ENCODE measurements at regions of chr3 and their contacts with region 1.

Region 1: GRCh38 chr3:149717391-149718056 is 34.8 kb downstream of the COMMD2 start:
- DNase-seq: no peak
- ATAC-seq: no peak
- H3K4me3 Mint-ChIP-seq: peak overlapping the region; percentile 25
- H3K27ac Mint-ChIP-seq: no peak overlapping the region
- H3K4me1 Mint-ChIP-seq: no peaks in the 10 kb centered on the region
- H3K27me3 Mint-ChIP-seq: no peaks in the 10 kb centered on the region
- CTCF ChIP-seq: no peak

Region 2: GRCh38 chr3:148955544-148956346 is 761.8 kb before region 1 on chr3:
- CTCF ChIA-PET with region 1: no interaction called
- POLR2A ChIA-PET with region 1: no interaction called
- intact Hi-C with region 1: loop called (anchors 5 kb)
- DNase-seq: no peak
- ATAC-seq: no peak
- H3K4me3 Mint-ChIP-seq: no peak overlapping the region
- H3K27ac Mint-ChIP-seq: no peak overlapping the region
- H3K4me1 Mint-ChIP-seq: no peaks in the 10 kb centered on the region
- H3K27me3 Mint-ChIP-seq: peaks cover 7% of the 10 kb centered on the region
- CTCF ChIP-seq: no peak

Region 3: GRCh38 chr3:149273096-149273751 is 444.3 kb before region 1 on chr3:
- CTCF ChIA-PET with region 1: no interaction called
- POLR2A ChIA-PET with region 1: no interaction called
- intact Hi-C with region 1: loop called (anchors 5 kb)
- DNase-seq: no peak
- ATAC-seq: peak; percentile 88
- H3K4me3 Mint-ChIP-seq: no peak overlapping the region
- H3K27ac Mint-ChIP-seq: no peak overlapping the region
- H3K4me1 Mint-ChIP-seq: peaks cover 19% of the 10 kb centered on the region
- H3K27me3 Mint-ChIP-seq: no peaks in the 10 kb centered on the region
- CTCF ChIP-seq: peak; percentile 92

Region 4: GRCh38 chr3:149494022-149494758 is 223.3 kb before region 1 on chr3:
- CTCF ChIA-PET with region 1: no interaction called
- POLR2A ChIA-PET with region 1: no interaction called
- intact Hi-C with region 1: loop called (anchors 1 kb)
- DNase-seq: no peak
- ATAC-seq: no peak
- H3K4me3 Mint-ChIP-seq: no peak overlapping the region
- H3K27ac Mint-ChIP-seq: no peak overlapping the region
- H3K4me1 Mint-ChIP-seq: no peaks in the 10 kb centered on the region
- H3K27me3 Mint-ChIP-seq: peaks cover 15% of the 10 kb centered on the region
- CTCF ChIP-seq: no peak

Region 5: DNA sequence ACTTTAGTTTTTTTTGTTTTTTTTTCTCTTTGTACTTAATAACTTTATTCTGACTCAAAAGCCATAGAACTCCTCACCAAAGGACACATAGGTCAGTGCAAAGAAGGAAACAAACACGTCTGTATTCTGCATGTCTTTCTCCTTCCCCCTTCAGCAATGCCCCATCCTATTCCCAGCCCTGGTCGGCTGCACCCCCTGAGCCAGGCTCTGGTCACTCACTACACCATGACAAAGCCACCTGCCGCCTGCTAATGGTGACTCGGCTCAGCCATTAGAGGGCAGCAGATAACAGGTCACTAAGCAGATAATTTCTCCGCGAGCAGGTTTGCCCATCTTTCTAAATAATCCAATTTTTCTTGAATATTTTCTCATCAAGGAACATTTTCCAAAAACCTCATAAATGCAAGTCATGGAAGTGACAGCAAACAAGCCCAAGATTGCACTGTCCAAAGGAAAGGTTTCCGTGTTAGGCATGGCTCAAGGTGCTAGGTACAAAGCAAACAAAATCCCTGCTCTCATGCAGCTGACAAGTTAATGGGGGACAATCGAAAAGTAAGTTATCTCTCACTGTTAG is 205.2 kb before region 1 on chr3:
- CTCF ChIA-PET with region 1: interaction called, 4 read pairs
- POLR2A ChIA-PET with region 1: no interaction called
- intact Hi-C with region 1: loop called (anchors 1 kb)
- DNase-seq: no peak
- ATAC-seq: peak; percentile 56
- H3K4me3 Mint-ChIP-seq: no peak overlapping the region
- H3K27ac Mint-ChIP-seq: no peak overlapping the region
- H3K4me1 Mint-ChIP-seq: peaks cover 10% of the 10 kb centered on the region
- H3K27me3 Mint-ChIP-seq: peaks cover 13% of the 10 kb centered on the region
- CTCF ChIP-seq: peak; percentile 30

Region 6: DNA sequence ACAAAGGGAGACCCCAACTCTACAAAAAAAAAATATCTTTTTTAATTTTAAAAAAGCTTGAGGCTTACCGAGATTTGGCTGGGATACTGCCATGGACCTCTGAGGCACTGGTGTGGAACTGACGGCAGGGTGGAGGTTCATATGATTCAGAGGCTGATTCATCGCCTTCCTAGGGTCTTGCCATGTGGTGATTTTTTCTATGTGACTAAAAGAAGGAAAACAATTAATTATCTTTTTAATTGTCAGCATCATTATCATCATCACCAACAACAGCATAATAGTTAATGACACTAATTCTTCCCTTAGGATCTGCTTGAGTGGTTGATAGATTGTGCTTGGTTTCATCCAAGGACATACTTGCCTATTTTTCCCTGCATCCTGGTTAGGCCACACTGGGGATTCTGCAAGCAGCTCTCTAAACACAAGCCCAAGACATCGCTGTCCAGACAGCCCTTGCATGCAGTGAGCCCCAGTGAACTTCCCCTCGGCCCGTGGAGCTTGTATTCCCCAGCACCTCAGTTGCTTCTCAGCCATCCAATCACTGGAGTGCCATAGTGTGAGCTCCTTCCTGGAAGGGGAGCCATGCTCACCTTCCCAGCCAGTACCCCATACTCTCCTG is 144.6 kb before region 1 on chr3:
- CTCF ChIA-PET with region 1: interaction called, 6 read pairs
- POLR2A ChIA-PET with region 1: no interaction called
- intact Hi-C with region 1: loop called (anchors 1 kb)
- DNase-seq: no peak
- ATAC-seq: no peak
- H3K4me3 Mint-ChIP-seq: no peak overlapping the region
- H3K27ac Mint-ChIP-seq: no peak overlapping the region
- H3K4me1 Mint-ChIP-seq: peaks cover 4% of the 10 kb centered on the region
- H3K27me3 Mint-ChIP-seq: no peaks in the 10 kb centered on the region
- CTCF ChIP-seq: no peak

Region 7: DNA sequence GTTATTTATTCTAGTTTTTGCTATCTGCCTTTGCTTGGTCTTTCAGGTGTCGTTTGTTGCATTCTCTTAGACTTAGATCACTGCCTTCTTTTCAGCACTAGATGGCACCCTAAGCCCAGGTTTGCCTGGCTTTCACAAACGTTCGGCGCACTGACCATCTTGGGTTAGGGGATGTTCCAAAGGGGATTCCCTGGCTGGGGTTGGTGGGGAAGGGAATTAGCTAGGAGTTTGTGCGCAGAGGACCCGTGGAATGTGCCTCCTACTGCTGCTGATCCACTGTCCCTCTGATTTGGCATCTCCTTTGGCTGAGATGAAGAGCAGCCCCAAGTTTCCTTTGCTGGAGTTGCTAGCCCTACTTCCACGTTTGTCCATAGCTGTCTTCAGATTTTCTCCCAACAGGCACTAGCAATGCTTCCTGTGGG is 219.3 kb after region 1 on chr3:
- CTCF ChIA-PET with region 1: no interaction called
- POLR2A ChIA-PET with region 1: no interaction called
- intact Hi-C with region 1: no loop called
- DNase-seq: no peak
- ATAC-seq: peak; percentile 42
- H3K4me3 Mint-ChIP-seq: no peak overlapping the region
- H3K27ac Mint-ChIP-seq: no peak overlapping the region
- H3K4me1 Mint-ChIP-seq: peaks cover 15% of the 10 kb centered on the region
- H3K27me3 Mint-ChIP-seq: no peaks in the 10 kb centered on the region
- CTCF ChIP-seq: no peak